Sigmoid colon (tissue), 7 donors: ENCODE measurements at regions of chr4 and their contacts with region 1.

Region 1: GRCh38 chr4:98995183-98996055 is at the start of gene METAP1:
- DNase-seq: peak; percentile 98
- H3K4me3 ChIP-seq: peak within 1 kb of the TSS; percentile 79 to 96 (median 90)
- H3K27ac ChIP-seq: peak within 1 kb of the TSS; percentile 90 to 94 (median 92)
- H3K4me1 ChIP-seq: peaks cover 0 to 23% (median 14%) of the 10 kb centered on the region in 4 donors
- H3K27me3 ChIP-seq: no peaks in the 10 kb centered on the region
- CTCF ChIP-seq: peak; percentile 48 to 53 (median 52)
- EP300 ChIP-seq: no peak
- POLR2A ChIP-seq: peak; percentile 38 to 55
- total RNA-seq, gene METAP1: 47.6 to 56.0 (median 51.4) TPM

Region 2: GRCh38 chr4:98467627-98468072 is 527.8 kb before region 1 on chr4:
- intact Hi-C with region 1: loop called (anchors 5 kb)
- DNase-seq: peak; percentile 89
- H3K4me3 ChIP-seq: peak overlapping the region in 3 of 4 donors; percentile 25 to 45 (median 42)
- H3K27ac ChIP-seq: peak overlapping the region in 2 of 4 donors; percentile 8 to 23
- H3K4me1 ChIP-seq: peaks cover 0 to 14% (median 12%) of the 10 kb centered on the region in 4 donors
- H3K27me3 ChIP-seq: no peaks in the 10 kb centered on the region
- CTCF ChIP-seq: peak; percentile 64 to 73 (median 69)
- EP300 ChIP-seq: no peak
- POLR2A ChIP-seq: no peak

Region 3: DNA sequence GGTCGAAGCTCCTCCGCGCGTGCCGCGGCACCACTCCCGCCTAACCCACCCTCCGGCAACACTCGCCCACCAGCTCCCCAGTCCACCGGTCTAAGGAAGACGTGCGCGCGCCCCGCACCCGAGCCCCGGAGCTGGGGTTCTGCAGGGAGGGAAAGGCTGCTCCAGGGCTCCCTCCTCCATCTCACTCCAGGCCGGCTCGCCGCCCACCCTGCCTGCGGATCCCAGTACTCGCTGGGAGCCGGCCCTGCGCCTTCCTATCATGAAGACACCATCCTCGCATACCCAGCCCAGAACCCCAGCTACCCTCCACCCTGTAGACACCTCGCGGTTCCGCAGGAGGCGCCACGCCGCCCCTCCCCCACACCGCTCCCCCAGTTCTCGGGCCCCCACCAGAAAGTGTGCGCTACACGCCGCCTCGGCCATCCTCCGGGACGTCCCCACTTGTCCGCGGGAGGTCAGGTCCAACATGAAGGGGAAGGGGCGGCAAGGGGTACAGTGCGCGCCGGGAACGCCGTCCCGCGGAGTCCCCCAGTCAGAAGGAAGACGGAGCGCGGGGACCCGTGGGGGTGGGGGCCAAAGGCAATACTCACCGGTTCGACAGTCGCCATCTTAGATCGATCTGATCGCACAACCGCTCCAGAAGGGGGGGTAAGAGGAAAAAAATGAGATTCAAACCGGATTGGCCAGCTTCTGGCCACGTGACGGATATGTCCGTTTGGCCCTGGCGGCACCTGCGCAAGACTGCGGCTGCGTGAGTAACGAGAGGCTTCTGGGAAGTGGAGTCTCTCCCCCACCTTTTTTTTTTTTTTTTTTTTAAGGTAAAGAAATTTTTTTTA is 66.7 kb before region 1 on chr4 and contains the start of gene EIF4E:
- intact Hi-C with region 1: loop called (anchors 2 kb)
- DNase-seq: peak; percentile 99
- H3K4me3 ChIP-seq: peak within 1 kb of the TSS; percentile 59 to 98 (median 96)
- H3K27ac ChIP-seq: peak within 1 kb of the TSS; percentile 88 to 98 (median 95)
- H3K4me1 ChIP-seq: peaks cover 0 to 30% (median 22%) of the 10 kb centered on the region in 4 donors
- H3K27me3 ChIP-seq: no peaks in the 10 kb centered on the region
- CTCF ChIP-seq: peak in 3 of 4 experiments; percentile 2 to 17 (median 13)
- EP300 ChIP-seq: peak in 1 of 4 donors; percentile 17
- POLR2A ChIP-seq: no peak
- total RNA-seq, gene EIF4E: 38.5 to 81.3 (median 65.4) TPM

Region 4: GRCh38 chr4:99067617-99068016 is 72.2 kb after region 1 on chr4:
- intact Hi-C with region 1: no loop called
- DNase-seq: no peak
- H3K4me3 ChIP-seq: no peak overlapping the region
- H3K27ac ChIP-seq: no peak overlapping the region
- H3K4me1 ChIP-seq: peaks cover 0 to 21% (median 8%) of the 10 kb centered on the region in 4 donors
- H3K27me3 ChIP-seq: no peaks in the 10 kb centered on the region
- CTCF ChIP-seq: no peak
- EP300 ChIP-seq: no peak
- POLR2A ChIP-seq: no peak

Region 5: DNA sequence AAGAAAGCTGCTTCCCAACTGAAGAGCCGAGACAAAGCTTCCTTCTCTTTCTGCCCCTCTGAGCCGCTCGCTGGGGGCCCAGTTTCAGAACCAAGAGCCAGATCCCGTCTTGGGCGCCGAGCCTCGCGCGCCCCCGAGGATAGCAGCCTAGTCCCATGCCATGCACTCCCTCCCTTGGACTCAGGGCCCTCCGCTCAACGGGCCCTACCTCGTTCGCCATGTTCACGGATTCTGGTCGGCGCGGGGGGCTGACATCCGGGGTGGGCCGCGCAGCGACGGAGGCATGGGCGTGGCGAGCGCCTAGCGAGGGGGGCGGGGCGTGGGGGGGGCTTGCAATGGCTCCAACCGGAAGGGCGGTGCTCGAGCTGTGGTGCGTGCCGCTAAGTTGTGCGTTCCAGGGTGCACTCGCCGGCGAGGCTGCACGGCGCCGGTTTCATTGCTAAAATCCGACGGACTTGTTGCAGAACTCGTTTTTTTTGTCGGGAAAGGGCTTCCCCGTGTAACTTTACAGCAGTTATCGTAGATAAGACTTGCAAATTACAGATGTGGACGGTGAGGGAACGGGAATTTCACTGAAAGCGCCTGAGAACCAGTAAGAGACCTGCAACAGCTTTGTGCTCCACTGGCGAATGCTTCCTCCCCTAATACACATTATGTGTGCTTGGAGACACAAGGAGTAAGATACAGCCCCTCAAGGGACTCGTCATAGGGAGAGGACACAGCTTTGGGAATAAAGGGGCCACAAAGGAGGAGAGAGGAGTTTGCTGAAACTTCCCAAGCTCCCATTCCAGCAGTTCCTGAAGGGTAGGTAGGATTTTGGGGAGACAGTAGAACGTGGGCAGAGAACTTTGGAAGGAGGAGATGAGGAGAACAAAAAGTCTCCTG is 93.3 kb after region 1 on chr4 and contains the start of gene ADH5:
- intact Hi-C with region 1: loop called (anchors 1 kb)
- DNase-seq: peak; percentile 96
- H3K4me3 ChIP-seq: peak within 1 kb of the TSS; percentile 73 to 89 (median 84)
- H3K27ac ChIP-seq: peak within 1 kb of the TSS; percentile 91 to 98 (median 97)
- H3K4me1 ChIP-seq: peaks cover 0 to 50% (median 38%) of the 10 kb centered on the region in 4 donors
- H3K27me3 ChIP-seq: no peaks in the 10 kb centered on the region
- CTCF ChIP-seq: no peak
- EP300 ChIP-seq: no peak
- POLR2A ChIP-seq: peak; percentile 94 to 97
- total RNA-seq, gene ADH5: 235 to 349 (median 263) TPM

Region 6: GRCh38 chr4:99282731-99283130 is 287.3 kb after region 1 on chr4:
- intact Hi-C with region 1: no loop called
- DNase-seq: no peak
- H3K4me3 ChIP-seq: no peak overlapping the region
- H3K27ac ChIP-seq: no peak overlapping the region
- H3K4me1 ChIP-seq: no peaks in the 10 kb centered on the region
- H3K27me3 ChIP-seq: no peaks in the 10 kb centered on the region
- CTCF ChIP-seq: no peak
- EP300 ChIP-seq: no peak
- POLR2A ChIP-seq: no peak

Region 7: DNA sequence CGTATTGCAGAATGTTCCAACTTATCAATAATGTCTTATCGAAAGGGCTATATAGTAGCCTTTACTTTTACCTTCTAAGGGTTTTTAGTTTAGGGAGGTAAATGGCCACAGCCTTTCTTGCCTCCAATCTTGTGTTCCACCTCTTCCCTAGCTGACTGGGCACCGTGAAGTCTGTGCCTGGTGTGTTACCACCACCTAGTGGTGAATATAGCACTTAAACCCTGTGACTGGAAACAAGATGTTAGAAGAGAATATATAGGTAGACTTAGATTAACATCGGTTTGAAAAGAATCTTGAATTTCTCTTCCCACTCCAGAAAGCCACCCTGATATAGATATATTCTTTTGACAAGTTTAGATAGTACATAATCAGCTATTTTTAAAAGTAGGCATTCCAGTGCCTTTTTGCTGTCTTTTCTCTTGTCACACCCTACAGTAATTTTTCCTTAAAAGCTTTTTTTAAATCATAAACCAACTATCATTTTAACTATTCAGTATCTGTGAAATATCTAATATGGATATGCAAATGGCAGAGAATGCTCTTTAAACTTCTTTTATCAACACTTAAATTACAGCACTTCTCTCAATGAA is 467.6 kb after region 1 on chr4:
- intact Hi-C with region 1: loop called (anchors 2 kb)
- DNase-seq: peak; percentile 80
- H3K4me3 ChIP-seq: no peak overlapping the region
- H3K27ac ChIP-seq: no peak overlapping the region
- H3K4me1 ChIP-seq: no peaks in the 10 kb centered on the region
- H3K27me3 ChIP-seq: no peaks in the 10 kb centered on the region
- CTCF ChIP-seq: peak; percentile 75 to 88 (median 80)
- EP300 ChIP-seq: no peak
- POLR2A ChIP-seq: no peak